ENCODE measurements at regions of chr20 and their contacts with region 1.

Region 1: DNA sequence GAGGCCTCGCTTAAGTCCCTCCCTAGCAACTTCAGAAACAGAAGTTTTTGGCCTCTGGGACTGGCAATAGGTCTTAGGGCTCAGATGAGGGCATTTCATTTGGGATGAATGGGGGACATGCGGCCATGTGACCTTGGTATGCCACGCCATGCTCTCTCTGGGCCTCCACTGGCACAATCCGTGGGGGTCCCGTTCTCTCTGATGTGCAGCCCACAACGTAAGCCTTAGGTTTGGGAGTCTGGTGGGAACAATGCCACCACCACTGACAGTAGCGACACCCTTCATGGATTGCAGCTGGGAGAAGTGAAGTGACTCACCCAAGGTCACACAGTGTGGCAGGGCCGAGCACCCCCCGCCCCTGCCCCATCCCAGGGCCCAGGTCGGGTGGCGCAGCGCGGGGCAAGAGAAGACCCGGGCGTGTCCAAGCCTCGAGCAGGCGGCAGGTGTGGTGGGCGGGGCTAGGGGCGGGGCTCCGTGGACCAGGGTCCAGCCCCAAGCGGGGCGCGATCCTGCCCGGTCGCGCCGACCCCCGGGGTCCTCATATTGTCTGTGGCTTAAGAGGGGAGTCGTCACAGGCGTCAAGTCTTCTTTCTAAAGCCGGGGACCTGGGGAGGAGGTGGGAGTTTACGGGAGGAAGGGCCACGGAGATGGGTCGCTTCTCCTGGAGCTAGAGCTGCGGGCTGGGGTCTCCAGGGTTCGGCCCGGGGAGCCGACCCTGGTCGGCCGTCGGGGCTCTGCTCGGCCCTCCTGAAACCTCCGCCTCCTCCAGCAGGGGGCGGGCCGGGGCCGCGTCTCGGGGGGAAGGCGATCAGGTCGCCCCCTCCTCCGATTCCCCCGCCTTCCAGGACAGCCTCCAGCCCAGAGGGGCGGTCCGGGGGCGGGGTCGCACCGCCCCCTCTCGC is 698 bp upstream of the CEBPB start:
- DNase-seq: peak; percentile 96
- H3K4me3 ChIP-seq: peak overlapping the region; percentile 75 to 100 (median 92)
- H3K27ac ChIP-seq: peak overlapping the region; percentile 91 to 100 (median 98)
- H3K4me1 ChIP-seq: peaks cover 27 to 52% (median 45%) of the 10 kb centered on the region in 4 donors
- H3K27me3 ChIP-seq: no peaks in the 10 kb centered on the region
- CTCF ChIP-seq: peak; percentile 87 to 95 (median 90)
- EP300 ChIP-seq: no peak
- POLR2A ChIP-seq: no peak

Region 2: DNA sequence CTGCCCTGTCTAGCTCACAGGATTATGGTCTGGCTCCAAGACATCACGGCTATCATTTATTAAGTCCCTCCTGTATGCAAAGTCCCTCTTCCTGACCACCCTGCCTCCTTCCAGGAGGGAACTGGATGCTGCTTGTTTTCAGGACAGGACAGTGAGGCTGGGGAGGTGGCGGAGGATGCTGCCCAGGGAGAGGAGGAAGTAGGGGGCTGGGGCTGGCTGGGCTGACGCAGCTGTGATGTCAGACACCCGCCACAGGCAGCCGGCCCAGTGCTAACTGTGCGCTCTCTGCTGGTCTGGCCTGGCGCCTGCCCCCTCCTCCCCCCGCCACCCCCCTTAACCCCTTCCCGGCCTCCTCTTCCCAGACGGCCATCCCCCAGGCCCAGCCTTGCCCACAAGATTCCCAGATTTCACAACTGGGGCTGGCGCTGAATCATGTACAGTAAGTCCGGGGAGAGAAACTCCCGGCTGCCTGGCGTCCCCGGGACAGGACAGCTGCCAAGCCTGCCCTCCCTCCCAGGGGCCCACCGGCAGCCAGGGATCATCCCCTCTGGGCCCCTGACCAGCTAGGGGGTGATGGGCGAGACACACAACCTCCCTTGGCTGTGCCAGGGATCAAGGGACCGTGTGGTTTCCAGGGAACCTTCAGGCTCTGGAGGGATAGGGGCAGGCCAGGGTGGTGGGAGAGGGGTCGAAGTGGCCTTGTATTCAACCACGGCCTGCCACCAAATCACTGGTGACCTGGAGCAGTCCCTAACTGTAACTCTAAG is 118.8 kb after region 1 on chr20:
- intact Hi-C with region 1: loop called (anchors 2 kb)
- DNase-seq: peak; percentile 99
- H3K4me3 ChIP-seq: peak overlapping the region; percentile 2 to 28 (median 16)
- H3K27ac ChIP-seq: peak overlapping the region; percentile 82 to 89 (median 88)
- H3K4me1 ChIP-seq: peaks cover 59 to 100% (median 88%) of the 10 kb centered on the region in 4 donors
- H3K27me3 ChIP-seq: no peaks in the 10 kb centered on the region
- CTCF ChIP-seq: peak in 1 of 3 experiments; percentile 28
- EP300 ChIP-seq: no peak
- POLR2A ChIP-seq: peak; percentile 65

Region 3: DNA sequence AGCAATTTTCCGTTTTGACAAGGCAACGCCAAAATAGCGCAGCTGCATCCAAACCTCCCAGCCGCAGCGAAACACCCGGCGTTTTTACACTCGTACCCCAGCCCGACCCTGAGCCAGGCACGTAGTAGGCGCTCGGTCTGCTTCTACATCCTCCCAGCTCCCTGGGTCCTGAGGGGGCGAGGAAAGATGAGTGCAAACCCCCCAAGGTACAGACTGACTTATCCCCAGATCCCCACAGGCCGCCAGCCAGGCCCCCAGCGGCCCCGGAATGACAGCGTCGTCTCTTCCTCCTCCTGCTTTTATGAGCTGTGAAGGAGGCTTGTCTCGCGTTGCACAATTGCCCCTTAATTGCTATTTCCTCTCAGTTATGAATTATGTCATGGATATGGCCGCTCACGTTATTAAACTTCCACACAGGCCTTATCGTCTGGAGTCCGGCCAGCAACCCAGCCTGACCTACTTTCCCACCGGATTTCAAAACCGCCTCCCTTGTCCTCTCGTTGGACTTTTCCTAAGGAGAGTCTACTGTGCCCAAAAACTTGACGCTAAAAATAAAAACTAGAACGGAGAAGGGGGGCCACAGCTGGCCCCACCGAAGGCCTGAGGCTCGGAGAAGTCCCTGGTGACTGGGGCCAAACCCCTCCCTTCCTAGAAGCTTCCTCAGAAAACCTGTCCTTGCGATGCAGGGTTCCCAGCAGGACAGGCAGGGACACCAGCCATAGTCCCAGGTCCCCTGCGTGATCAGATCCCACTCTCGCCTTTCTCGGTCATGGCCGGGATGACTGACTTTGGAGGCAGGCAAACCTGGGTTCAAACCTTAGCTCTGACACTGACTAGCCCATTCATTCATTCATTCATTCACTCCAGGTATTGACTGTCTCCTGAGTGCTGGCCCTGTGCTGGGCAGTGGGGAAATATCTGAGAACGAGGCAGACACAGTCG is 189.4 kb after region 1 on chr20:
- intact Hi-C with region 1: loop called (anchors 2 kb)
- DNase-seq: peak; percentile 98
- H3K4me3 ChIP-seq: peak overlapping the region; percentile 20 to 36 (median 24)
- H3K27ac ChIP-seq: peak overlapping the region; percentile 81 to 86 (median 82)
- H3K4me1 ChIP-seq: peaks cover 21 to 59% (median 42%) of the 10 kb centered on the region in 4 donors
- H3K27me3 ChIP-seq: no peaks in the 10 kb centered on the region
- CTCF ChIP-seq: no peak
- EP300 ChIP-seq: no peak
- POLR2A ChIP-seq: peak; percentile 76

Region 4: GRCh38 chr20:50462093-50462690 is 272.3 kb after region 1 on chr20:
- intact Hi-C with region 1: loop called (anchors 2 kb)
- DNase-seq: no peak
- H3K4me3 ChIP-seq: no peak overlapping the region
- H3K27ac ChIP-seq: peak overlapping the region; percentile 30 to 56 (median 50)
- H3K4me1 ChIP-seq: peaks cover 13 to 42% (median 32%) of the 10 kb centered on the region in 4 donors
- H3K27me3 ChIP-seq: no peaks in the 10 kb centered on the region
- CTCF ChIP-seq: no peak
- EP300 ChIP-seq: no peak
- POLR2A ChIP-seq: no peak

Region 5: DNA sequence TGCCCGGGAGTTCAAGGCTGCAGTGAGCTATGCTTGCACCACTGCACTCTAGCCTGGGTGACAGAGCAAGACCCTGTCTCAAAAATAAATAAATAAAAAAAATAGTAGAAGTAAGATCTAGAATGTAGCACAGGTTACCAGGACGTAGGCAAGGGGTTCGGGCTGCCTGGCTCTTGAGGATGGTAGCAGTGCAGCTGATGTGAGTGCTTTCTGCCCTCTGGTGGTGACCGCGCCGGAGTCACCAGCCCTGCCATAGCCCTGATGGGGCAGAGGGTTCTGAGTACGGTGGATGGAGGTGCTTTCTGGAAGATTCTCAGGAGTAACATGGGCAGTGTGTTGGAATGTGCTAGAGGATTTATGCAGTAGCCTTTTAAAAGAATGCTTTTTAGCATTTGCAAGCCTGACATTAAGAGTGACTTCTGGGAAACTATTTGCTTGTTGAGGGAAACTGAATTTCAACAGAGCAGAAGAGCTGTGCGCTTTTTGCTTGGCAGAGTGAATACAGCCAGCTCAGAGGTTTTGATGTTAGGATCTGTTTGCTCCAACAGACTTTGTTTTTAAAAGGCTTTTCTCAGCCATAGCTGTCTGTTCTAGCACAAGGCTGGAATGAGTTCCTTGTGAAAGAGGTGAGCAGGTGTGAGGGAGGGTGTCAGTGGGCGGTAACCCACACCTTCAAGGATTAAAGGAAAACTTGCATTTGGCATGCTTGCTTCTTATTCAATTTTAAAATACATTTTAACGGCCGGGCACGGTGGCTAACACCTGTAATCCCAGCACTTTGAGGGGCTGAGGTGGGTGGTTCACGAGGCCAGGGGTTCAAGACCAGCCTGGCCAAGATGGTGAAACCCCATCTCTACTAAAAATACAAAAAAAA is 386.2 kb after region 1 on chr20:
- intact Hi-C with region 1: loop called (anchors 5 kb)
- DNase-seq: no peak
- H3K4me3 ChIP-seq: no peak overlapping the region
- H3K27ac ChIP-seq: peak overlapping the region; percentile 15 to 60 (median 50)
- H3K4me1 ChIP-seq: peaks cover 35 to 63% (median 55%) of the 10 kb centered on the region in 4 donors
- H3K27me3 ChIP-seq: no peaks in the 10 kb centered on the region
- CTCF ChIP-seq: peak; percentile 80 to 88 (median 84)
- EP300 ChIP-seq: no peak
- POLR2A ChIP-seq: no peak

Region 6: GRCh38 chr20:50744143-50744792 is 554.3 kb after region 1 on chr20:
- intact Hi-C with region 1: loop called (anchors 10 kb)
- DNase-seq: no peak
- H3K4me3 ChIP-seq: peak overlapping the region in 2 of 4 donors; percentile 1
- H3K27ac ChIP-seq: peak overlapping the region; percentile 76 to 85 (median 82)
- H3K4me1 ChIP-seq: peaks cover 25 to 51% (median 37%) of the 10 kb centered on the region in 4 donors
- H3K27me3 ChIP-seq: no peaks in the 10 kb centered on the region
- CTCF ChIP-seq: peak; percentile 55 to 57 (median 55)
- EP300 ChIP-seq: no peak
- POLR2A ChIP-seq: no peak